Calu3 (cell line): ENCODE measurements at regions of chr1 and their contacts with region 1.

Region 1: GRCh38 chr1:78617615-78618026 is 2.6 kb upstream of the IFI44L start:
- DNase-seq: peak; percentile 67
- H3K4me3 Mint-ChIP-seq: no peak overlapping the region
- H3K27ac Mint-ChIP-seq: no peak overlapping the region
- H3K4me1 Mint-ChIP-seq: peaks cover 30% of the 10 kb centered on the region
- H3K27me3 Mint-ChIP-seq: no peaks in the 10 kb centered on the region
- CTCF ChIP-seq: peak; percentile 83

Region 2: GRCh38 chr1:78649628-78650027 is 32.0 kb after region 1 on chr1 and contains the start of gene IFI44:
- CTCF ChIA-PET with region 1: no interaction called
- intact Hi-C with region 1: loop called (anchors 1 kb)
- DNase-seq: peak; percentile 80
- H3K4me3 Mint-ChIP-seq: peak within 1 kb of the TSS; percentile 78
- H3K27ac Mint-ChIP-seq: peak within 1 kb of the TSS; percentile 63
- H3K4me1 Mint-ChIP-seq: peaks cover 7% of the 10 kb centered on the region
- H3K27me3 Mint-ChIP-seq: no peaks in the 10 kb centered on the region
- CTCF ChIP-seq: no peak
- total RNA-seq, gene IFI44: 125 and 259 TPM in 2 replicates

Region 3: DNA sequence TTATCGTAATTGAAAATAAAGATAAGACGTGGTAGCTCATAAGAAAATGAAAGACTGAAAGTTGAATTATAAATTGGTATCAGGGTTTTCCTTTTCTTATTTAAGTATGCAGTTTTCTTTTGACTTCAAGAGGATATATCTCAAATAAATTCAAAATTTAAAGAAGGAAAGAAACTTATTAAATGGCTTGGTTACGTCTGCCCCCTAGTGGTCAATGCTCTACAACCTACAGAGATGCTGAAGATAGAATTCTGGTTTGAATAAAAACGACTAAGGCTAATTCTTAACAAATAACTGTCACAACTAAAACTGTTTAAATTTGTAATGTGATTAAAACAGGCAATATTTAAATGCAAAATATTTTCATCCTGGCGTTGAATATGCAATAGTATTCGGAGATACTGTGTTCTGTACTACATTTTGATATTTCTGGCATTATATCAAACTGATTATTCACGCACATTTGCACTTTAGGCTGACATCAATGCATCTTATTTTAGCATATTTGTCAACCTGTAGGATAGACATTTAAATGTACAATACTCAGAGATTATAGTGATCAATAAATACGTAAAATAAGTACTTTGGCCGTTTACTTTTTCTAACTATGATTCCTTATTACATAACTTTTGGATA is 58.8 kb after region 1 on chr1:
- CTCF ChIA-PET with region 1: interaction called, 4 read pairs
- intact Hi-C with region 1: loop called (anchors 1 kb)
- DNase-seq: peak; percentile 64
- H3K4me3 Mint-ChIP-seq: no peak overlapping the region
- H3K27ac Mint-ChIP-seq: no peak overlapping the region
- H3K4me1 Mint-ChIP-seq: peaks cover 10% of the 10 kb centered on the region
- H3K27me3 Mint-ChIP-seq: no peaks in the 10 kb centered on the region
- CTCF ChIP-seq: no peak

Region 4: GRCh38 chr1:79177844-79178243 is 560.2 kb after region 1 on chr1:
- CTCF ChIA-PET with region 1: no interaction called
- intact Hi-C with region 1: no loop called
- DNase-seq: no peak
- H3K4me3 Mint-ChIP-seq: no peak overlapping the region
- H3K27ac Mint-ChIP-seq: no peak overlapping the region
- H3K4me1 Mint-ChIP-seq: no peaks in the 10 kb centered on the region
- H3K27me3 Mint-ChIP-seq: no peaks in the 10 kb centered on the region
- CTCF ChIP-seq: no peak

Region 5: DNA sequence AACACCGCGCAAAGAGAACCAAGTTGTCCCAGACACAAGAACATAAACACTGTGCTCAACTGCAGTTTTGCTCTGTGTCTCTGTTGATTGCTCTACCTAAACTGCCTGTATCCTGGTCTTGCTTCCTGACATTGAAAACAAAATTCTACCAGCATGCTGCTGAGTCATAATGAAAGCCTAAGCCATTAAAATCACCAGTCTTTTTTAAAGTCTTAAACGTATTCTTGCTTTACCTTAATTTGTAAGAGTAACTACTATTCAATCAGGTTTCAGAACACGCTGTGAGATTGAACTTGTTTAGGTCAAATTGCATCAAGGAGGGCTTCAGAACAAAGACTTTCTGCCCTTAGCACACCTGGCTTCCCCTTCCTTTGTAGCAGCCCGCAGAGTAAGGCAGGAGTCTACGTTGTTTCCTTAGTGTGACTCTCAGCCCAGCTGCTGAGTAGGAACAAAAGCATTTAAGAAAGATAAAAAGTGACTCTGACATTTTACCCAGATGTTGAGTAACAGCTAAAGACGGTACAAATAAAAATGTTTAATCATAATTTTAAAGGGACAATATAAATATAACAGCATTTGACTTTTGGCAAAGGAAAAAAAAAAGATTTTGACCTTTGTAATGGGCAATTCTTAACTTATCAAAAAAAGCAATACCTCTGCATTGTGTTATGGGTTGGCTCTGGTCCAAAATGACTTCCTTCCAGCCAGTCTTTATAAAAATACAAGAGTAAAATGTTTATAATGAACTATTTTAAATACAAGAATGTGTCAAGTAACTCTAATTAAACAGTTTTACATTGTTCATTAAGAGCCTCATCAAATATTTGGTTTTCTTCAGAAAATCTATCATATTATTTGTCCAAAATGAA is 575.8 kb after region 1 on chr1:
- CTCF ChIA-PET with region 1: interaction called, 3 read pairs
- intact Hi-C with region 1: loop called (anchors 10 kb)
- DNase-seq: peak; percentile 28
- H3K4me3 Mint-ChIP-seq: peak overlapping the region; percentile 10
- H3K27ac Mint-ChIP-seq: peak overlapping the region; percentile 95
- H3K4me1 Mint-ChIP-seq: peaks cover 37% of the 10 kb centered on the region
- H3K27me3 Mint-ChIP-seq: no peaks in the 10 kb centered on the region
- CTCF ChIP-seq: no peak